ENCODE measurements at regions of chr7 and their contacts with region 1.

Region 1: DNA sequence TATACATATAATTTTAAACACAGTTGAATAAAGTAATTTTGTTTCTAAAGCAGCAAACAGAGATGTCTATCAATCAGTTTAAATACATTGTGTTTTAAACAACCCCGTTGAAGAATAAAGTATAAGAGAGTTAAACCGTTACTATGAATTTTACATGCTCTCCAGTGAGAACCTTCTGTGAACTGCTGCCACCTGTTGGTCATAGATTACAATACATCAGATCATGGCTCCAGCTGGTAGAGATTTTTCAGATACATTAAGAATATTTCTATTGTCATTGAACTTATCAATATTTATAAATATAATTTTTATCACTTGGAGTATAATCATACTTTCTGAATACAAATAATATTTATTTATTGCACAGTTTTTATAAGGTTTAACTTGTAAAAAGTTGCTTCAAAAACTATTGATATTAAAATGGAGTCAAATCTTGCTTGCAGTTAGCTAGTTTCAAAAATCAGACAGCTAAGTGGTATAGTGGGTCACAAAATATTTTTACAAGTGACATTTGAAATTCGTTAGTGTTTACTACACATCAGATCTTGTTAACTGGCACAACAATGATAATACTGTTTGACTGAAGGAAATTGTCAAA is 561.2 kb upstream of the PHF14 start:
- DNase-seq: no peak
- H3K4me3 Mint-ChIP-seq: no peak overlapping the region
- H3K27ac Mint-ChIP-seq: no peak overlapping the region
- H3K4me1 Mint-ChIP-seq: no peaks in the 10 kb centered on the region
- H3K27me3 Mint-ChIP-seq: no peaks in the 10 kb centered on the region

Region 2: GRCh38 chr7:8436965-8437364 is 1975.6 kb before region 1 on chr7:
- intact Hi-C with region 1: loop called (anchors 10 kb)
- DNase-seq: peak; percentile 34
- H3K4me3 Mint-ChIP-seq: no peak overlapping the region
- H3K27ac Mint-ChIP-seq: no peak overlapping the region
- H3K4me1 Mint-ChIP-seq: peaks cover 2% of the 10 kb centered on the region
- H3K27me3 Mint-ChIP-seq: peaks cover 84% of the 10 kb centered on the region

Region 3: DNA sequence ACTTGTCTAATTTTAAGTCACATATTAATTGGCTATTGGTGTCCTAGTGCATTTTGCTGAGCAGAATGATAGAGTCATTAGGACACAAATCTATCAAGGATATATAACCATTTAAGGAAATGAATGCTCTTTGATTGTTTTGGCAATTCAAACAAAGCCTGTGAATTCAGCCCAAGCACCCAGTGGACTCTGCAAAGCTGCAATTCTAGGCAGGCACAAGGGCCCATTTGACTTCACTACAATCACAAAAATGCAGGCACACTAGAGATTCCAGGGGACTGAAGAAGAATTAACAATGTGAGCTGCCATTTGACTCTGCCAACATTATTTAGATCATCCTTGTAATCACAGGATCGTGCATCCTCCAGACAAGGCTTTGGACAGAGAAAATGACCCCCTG is 17.0 kb after region 1 on chr7:
- intact Hi-C with region 1: no loop called
- DNase-seq: no peak
- H3K4me3 Mint-ChIP-seq: no peak overlapping the region
- H3K27ac Mint-ChIP-seq: no peak overlapping the region
- H3K4me1 Mint-ChIP-seq: no peaks in the 10 kb centered on the region
- H3K27me3 Mint-ChIP-seq: no peaks in the 10 kb centered on the region

Region 4: DNA sequence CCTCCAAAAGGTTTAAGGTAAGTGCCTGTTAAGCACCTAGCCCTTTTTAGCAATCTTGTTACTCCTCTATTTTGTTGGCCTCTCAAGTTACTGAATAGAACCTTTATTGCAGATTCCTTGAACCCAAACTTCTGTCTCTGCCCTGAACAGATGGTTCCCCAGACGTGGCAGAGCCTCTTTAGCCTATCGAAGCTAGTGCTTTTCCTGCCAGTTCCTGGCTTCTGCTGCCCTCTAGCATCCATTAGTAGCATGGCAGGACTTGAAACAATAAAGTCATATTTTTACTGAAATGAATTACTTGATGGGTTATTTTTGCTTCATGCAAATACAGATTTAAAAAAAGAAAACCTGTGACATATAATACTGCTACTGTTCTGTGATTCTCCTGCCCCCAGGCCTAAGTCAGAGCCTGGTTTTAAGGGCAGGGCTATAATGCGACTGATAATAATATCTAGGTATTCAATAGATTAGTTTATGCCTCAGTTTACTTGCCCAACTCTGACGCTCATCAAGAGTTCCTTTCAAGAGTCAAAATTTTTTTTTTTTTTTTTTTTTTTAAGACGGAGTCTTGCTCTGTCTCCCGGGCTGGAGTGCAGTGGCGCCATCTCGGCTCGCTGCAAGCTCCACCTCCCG is 476.9 kb after region 1 on chr7:
- intact Hi-C with region 1: loop called (anchors 5 kb)
- DNase-seq: peak; percentile 10
- H3K4me3 Mint-ChIP-seq: peak overlapping the region; percentile 18
- H3K27ac Mint-ChIP-seq: no peak overlapping the region
- H3K4me1 Mint-ChIP-seq: peaks cover 10% of the 10 kb centered on the region
- H3K27me3 Mint-ChIP-seq: no peaks in the 10 kb centered on the region